ENCODE measurements at regions of chr15 and their contacts with region 1.

Region 1: GRCh38 chr15:26095710-26096330 is 232.7 kb upstream of the ATP10A start:
- DNase-seq: no peak
- ATAC-seq: no peak
- H3K4me3 ChIP-seq: no peak overlapping the region
- H3K4me3 Mint-ChIP-seq: no peak overlapping the region
- H3K27ac ChIP-seq: no peak overlapping the region
- H3K27ac Mint-ChIP-seq: no peak overlapping the region
- H3K4me1 ChIP-seq: no peaks in the 10 kb centered on the region
- H3K4me1 Mint-ChIP-seq: no peaks in the 10 kb centered on the region
- H3K27me3 ChIP-seq: no peaks in the 10 kb centered on the region
- H3K27me3 Mint-ChIP-seq: peaks cover 17% of the 10 kb centered on the region
- CTCF ChIP-seq: no peak

Region 2: DNA sequence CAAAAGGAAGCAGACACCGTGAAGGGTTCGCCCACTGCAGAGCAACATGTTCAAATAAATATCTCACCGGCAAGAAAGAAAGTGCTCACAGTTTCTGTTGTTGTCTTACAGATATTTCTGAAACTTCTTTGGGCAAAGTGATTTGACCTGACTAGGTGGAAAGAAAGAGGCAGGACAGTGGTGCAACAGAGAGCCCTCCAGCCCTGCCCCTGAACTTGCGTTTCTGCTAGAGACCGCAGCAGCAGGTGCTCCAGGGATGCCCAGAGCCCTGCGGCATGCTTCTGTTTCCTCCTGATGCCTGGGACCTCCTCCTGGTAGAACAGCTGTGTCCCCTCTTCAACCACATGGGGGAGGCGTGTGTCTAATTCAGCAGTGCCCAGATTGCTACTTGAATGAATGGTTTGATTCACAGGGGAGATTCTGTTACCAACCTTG is 356.1 kb before region 1 on chr15:
- CTCF ChIA-PET with region 1: interaction called, 4 read pairs
- POLR2A ChIA-PET with region 1: no interaction called
- intact Hi-C with region 1: loop called in 1 of 2 experiments (anchors 10 kb)
- DNase-seq: peak in 7 of 9 experiments; percentile 16 to 62 (median 44)
- ATAC-seq: peak; percentile 67
- H3K4me3 ChIP-seq: no peak overlapping the region
- H3K4me3 Mint-ChIP-seq: no peak overlapping the region
- H3K27ac ChIP-seq: no peak overlapping the region
- H3K27ac Mint-ChIP-seq: no peak overlapping the region
- H3K4me1 ChIP-seq: peaks cover 4% of the 10 kb centered on the region
- H3K4me1 Mint-ChIP-seq: peaks cover 27% of the 10 kb centered on the region
- H3K27me3 ChIP-seq: no peaks in the 10 kb centered on the region
- H3K27me3 Mint-ChIP-seq: no peaks in the 10 kb centered on the region
- CTCF ChIP-seq: peak; percentile 36

Region 3: DNA sequence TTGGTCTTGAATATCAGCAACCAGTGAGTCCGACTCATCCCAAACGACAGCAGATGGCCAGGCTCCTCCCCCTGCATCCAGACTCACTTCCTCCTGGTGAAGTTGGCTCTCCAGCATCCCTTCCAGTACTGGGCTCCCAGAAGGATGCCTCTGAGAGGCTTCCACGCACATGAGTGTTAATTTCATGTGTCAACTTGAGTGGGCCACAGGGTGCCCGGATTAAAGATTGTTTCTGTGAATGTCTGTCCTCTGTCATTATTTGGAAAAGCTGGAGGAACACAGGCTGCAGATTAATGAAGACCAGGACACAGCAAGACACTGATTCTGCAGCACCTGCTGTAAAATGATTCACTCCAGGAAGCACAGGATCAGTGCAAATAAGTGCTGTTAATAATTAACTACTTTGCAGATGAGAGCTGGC is 332.5 kb before region 1 on chr15:
- CTCF ChIA-PET with region 1: no interaction called
- POLR2A ChIA-PET with region 1: no interaction called
- intact Hi-C with region 1: no loop called
- DNase-seq: no peak
- ATAC-seq: no peak
- H3K4me3 ChIP-seq: no peak overlapping the region
- H3K4me3 Mint-ChIP-seq: no peak overlapping the region
- H3K27ac ChIP-seq: no peak overlapping the region
- H3K27ac Mint-ChIP-seq: no peak overlapping the region
- H3K4me1 ChIP-seq: no peaks in the 10 kb centered on the region
- H3K4me1 Mint-ChIP-seq: peaks cover 4% of the 10 kb centered on the region
- H3K27me3 ChIP-seq: no peaks in the 10 kb centered on the region
- H3K27me3 Mint-ChIP-seq: no peaks in the 10 kb centered on the region
- CTCF ChIP-seq: no peak

Region 4: DNA sequence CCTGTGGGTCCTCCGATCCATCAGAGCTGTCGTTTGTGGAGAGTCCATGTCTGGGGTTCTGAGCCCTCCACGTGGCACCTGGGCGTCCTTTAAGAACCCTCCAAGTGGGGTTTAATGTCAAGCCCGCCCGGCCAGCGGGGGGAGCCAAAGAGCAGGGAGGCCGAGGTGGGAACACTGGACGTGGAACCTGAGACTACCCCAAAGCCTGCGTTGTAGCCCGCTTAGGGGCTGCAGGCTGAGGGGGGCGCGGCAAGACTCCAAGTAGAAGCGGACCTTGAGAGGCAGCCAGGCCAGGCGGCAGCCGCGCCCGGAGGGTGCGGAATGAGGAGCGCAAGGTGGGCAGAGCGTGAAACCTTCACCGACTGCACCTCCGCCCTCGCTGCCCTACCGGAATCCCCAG is 106.5 kb before region 1 on chr15:
- CTCF ChIA-PET with region 1: no interaction called
- POLR2A ChIA-PET with region 1: no interaction called
- intact Hi-C with region 1: no loop called
- DNase-seq: no peak
- ATAC-seq: no peak
- H3K4me3 ChIP-seq: no peak overlapping the region
- H3K4me3 Mint-ChIP-seq: no peak overlapping the region
- H3K27ac ChIP-seq: no peak overlapping the region
- H3K27ac Mint-ChIP-seq: no peak overlapping the region
- H3K4me1 ChIP-seq: no peaks in the 10 kb centered on the region
- H3K4me1 Mint-ChIP-seq: no peaks in the 10 kb centered on the region
- H3K27me3 ChIP-seq: no peaks in the 10 kb centered on the region
- H3K27me3 Mint-ChIP-seq: peaks cover 2% of the 10 kb centered on the region
- CTCF ChIP-seq: no peak

Region 5: DNA sequence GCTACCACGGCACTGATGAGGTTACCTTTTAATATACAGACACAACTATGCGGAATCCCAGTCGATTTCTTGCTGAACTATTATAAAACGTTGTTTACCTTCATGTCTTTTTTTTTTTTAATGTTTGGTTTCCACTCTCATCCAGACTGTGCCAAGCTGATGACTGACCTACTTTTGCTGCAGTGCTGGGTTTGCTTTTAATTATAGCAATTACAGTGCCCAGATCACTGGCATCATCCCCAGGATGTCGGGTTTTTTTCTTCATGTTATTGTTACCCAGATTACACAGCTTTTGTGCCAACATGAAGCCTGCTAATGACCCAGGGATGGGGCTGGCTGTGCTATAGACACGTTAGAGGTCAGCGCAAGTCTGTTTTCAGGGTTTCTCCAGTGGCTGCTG is 61.3 kb after region 1 on chr15:
- CTCF ChIA-PET with region 1: no interaction called
- POLR2A ChIA-PET with region 1: no interaction called
- intact Hi-C with region 1: loop called in 1 of 2 experiments (anchors 10 kb)
- DNase-seq: no peak
- ATAC-seq: no peak
- H3K4me3 ChIP-seq: no peak overlapping the region
- H3K4me3 Mint-ChIP-seq: no peak overlapping the region
- H3K27ac ChIP-seq: no peak overlapping the region
- H3K27ac Mint-ChIP-seq: no peak overlapping the region
- H3K4me1 ChIP-seq: no peaks in the 10 kb centered on the region
- H3K4me1 Mint-ChIP-seq: no peaks in the 10 kb centered on the region
- H3K27me3 ChIP-seq: no peaks in the 10 kb centered on the region
- H3K27me3 Mint-ChIP-seq: peaks cover 28% of the 10 kb centered on the region
- CTCF ChIP-seq: no peak